OCI-LY7 (cell line): ENCODE measurements at regions of chr19 and their contacts with region 1.

Region 1: GRCh38 chr19:1478934-1479707 is at the start of gene C19orf25:
- DNase-seq: peak; percentile 96
- H3K4me3 ChIP-seq: peak within 1 kb of the TSS; percentile 88
- H3K27ac ChIP-seq: peak within 1 kb of the TSS; percentile 81
- H3K4me1 ChIP-seq: peaks cover 14% of the 10 kb centered on the region
- CTCF ChIP-seq: no peak
- total RNA-seq, gene C19orf25: 27.1 and 45.6 TPM in 2 replicates

Region 2: GRCh38 chr19:1445185-1445931 is 33.8 kb before region 1 on chr19:
- CTCF ChIA-PET with region 1: no interaction called
- POLR2A ChIA-PET with region 1: no interaction called
- intact Hi-C with region 1: loop called (anchors 2 kb)
- DNase-seq: peak; percentile 80
- H3K4me3 ChIP-seq: peak overlapping the region; percentile 60
- H3K27ac ChIP-seq: peak overlapping the region; percentile 64
- H3K4me1 ChIP-seq: peaks cover 37% of the 10 kb centered on the region
- CTCF ChIP-seq: peak; percentile 87

Region 3: DNA sequence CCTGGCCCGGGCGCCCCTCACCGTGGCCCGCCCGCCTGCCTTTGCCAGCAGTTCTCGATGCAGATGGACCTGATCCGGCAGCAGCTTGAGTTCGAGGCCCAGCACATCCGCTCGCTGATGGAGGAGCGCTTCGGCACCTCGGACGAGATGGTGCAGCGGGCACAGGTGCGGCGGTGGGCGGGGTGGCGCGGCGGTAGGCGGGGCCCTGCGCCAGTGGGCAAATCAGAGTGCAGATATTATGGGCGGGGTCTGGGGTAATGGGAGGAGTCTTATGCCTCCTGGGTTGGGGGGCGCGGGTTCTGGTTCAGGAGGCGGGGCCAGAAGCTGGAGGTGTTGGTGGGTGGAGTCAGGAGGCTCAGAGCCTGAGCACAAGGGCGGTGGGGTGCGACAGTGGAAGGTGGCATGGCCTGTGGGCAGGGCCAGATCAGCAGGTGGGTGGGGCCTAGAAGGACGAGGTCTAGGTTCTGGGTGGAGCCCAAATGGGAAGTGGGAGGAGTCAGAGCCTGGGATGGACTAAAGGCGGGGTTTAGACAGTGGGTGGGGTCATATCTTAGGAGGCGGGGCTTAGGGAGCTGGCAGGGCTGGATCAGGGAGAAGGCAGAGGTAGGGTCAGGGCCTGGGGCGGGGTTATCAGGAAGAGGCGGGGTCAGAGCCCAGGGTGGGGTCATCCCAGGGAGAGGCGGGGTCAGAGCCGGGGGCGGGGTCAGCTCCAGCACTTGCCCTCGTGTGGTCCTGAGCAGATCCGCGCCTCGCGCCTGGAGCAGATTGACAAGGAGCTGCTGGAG is 23.6 kb before region 1 on chr19:
- CTCF ChIA-PET with region 1: no interaction called
- POLR2A ChIA-PET with region 1: no interaction called
- intact Hi-C with region 1: loop called (anchors 1 kb)
- DNase-seq: peak; percentile 95
- H3K4me3 ChIP-seq: peak overlapping the region; percentile 52
- H3K27ac ChIP-seq: peak overlapping the region; percentile 59
- H3K4me1 ChIP-seq: peaks cover 26% of the 10 kb centered on the region
- CTCF ChIP-seq: no peak

Region 4: GRCh38 chr19:1577090-1577928 is 98.2 kb after region 1 on chr19:
- CTCF ChIA-PET with region 1: no interaction called
- POLR2A ChIA-PET with region 1: no interaction called
- intact Hi-C with region 1: no loop called
- DNase-seq: no peak
- H3K4me3 ChIP-seq: no peak overlapping the region
- H3K27ac ChIP-seq: no peak overlapping the region
- H3K4me1 ChIP-seq: no peaks in the 10 kb centered on the region
- CTCF ChIP-seq: no peak

Region 5: GRCh38 chr19:1592755-1593500 is 113.8 kb after region 1 on chr19 and contains the start of gene MBD3:
- CTCF ChIA-PET with region 1: no interaction called
- POLR2A ChIA-PET with region 1: no interaction called
- intact Hi-C with region 1: no loop called
- DNase-seq: peak; percentile 95
- H3K4me3 ChIP-seq: peak within 1 kb of the TSS; percentile 100
- H3K27ac ChIP-seq: peak within 1 kb of the TSS; percentile 92
- H3K4me1 ChIP-seq: peaks cover 23% of the 10 kb centered on the region
- CTCF ChIP-seq: no peak
- total RNA-seq, gene MBD3: 147 and 172 TPM in 2 replicates